ENCODE measurements at regions of chr2 and their contacts with region 1.

Region 1: GRCh38 chr2:234308813-234309195 is 188.1 kb downstream of the ARL4C start:
- DNase-seq: no peak
- H3K4me3 Mint-ChIP-seq: no peak overlapping the region
- H3K27ac Mint-ChIP-seq: no peak overlapping the region
- H3K4me1 Mint-ChIP-seq: peaks cover 24% of the 10 kb centered on the region
- H3K27me3 Mint-ChIP-seq: no peaks in the 10 kb centered on the region
- CTCF ChIP-seq: no peak

Region 2: GRCh38 chr2:234335661-234336228 is 26.9 kb after region 1 on chr2:
- CTCF ChIA-PET with region 1: no interaction called
- POLR2A ChIA-PET with region 1: interaction called, 17 read pairs
- intact Hi-C with region 1: no loop called
- DNase-seq: peak; percentile 54
- H3K4me3 Mint-ChIP-seq: peak overlapping the region; percentile 17
- H3K27ac Mint-ChIP-seq: peak overlapping the region; percentile 22
- H3K4me1 Mint-ChIP-seq: peaks cover 6% of the 10 kb centered on the region
- H3K27me3 Mint-ChIP-seq: peaks cover 17% of the 10 kb centered on the region
- CTCF ChIP-seq: no peak